HCT116 (cell line): ENCODE measurements at regions of chr1 and their contacts with region 1.

Region 1: GRCh38 chr1:9110669-9111356 is 18.1 kb downstream of the GPR157 start:
- DNase-seq: peak; percentile 62
- ATAC-seq: peak; percentile 94
- H3K4me3 ChIP-seq: no peak overlapping the region
- H3K27ac ChIP-seq: no peak overlapping the region
- H3K4me1 ChIP-seq: peaks cover 0 to 3% of the 10 kb centered on the region in 2 experiments; a peak in 2 of 4 replicates
- H3K27me3 ChIP-seq: no peaks in the 10 kb centered on the region
- CTCF ChIP-seq: peak; percentile 94 to 96 (median 95)
- POLR2A ChIP-seq: no peak
- RAD21 ChIP-seq: peak; percentile 98

Region 2: GRCh38 chr1:9038881-9039760 is 71.7 kb before region 1 on chr1:
- CTCF ChIA-PET with region 1: no interaction called
- POLR2A ChIA-PET with region 1: no interaction called
- RAD21 ChIA-PET with region 1: no interaction called
- intact Hi-C with region 1: no loop called
- DNase-seq: no peak
- ATAC-seq: no peak
- H3K4me3 ChIP-seq: no peak overlapping the region
- H3K27ac ChIP-seq: no peak overlapping the region
- H3K4me1 ChIP-seq: no peaks in the 10 kb centered on the region
- H3K27me3 ChIP-seq: no peaks in the 10 kb centered on the region
- CTCF ChIP-seq: no peak
- POLR2A ChIP-seq: no peak
- RAD21 ChIP-seq: no peak

Region 3: GRCh38 chr1:9069326-9070100 is 41.3 kb before region 1 on chr1 and contains the start of gene SLC2A5:
- CTCF ChIA-PET with region 1: no interaction called
- POLR2A ChIA-PET with region 1: no interaction called
- RAD21 ChIA-PET with region 1: no interaction called
- intact Hi-C with region 1: no loop called
- DNase-seq: no peak
- ATAC-seq: no peak
- H3K4me3 ChIP-seq: no peak within 1 kb of the TSS
- H3K27ac ChIP-seq: no peak within 1 kb of the TSS
- H3K4me1 ChIP-seq: no peaks in the 10 kb centered on the region
- H3K27me3 ChIP-seq: no peaks in the 10 kb centered on the region
- CTCF ChIP-seq: no peak
- POLR2A ChIP-seq: no peak
- RAD21 ChIP-seq: no peak
- total RNA-seq, gene SLC2A5: not detected

Region 4: GRCh38 chr1:9121496-9122409 is 10.9 kb after region 1 on chr1:
- CTCF ChIA-PET with region 1: interaction called, 11 read pairs
- POLR2A ChIA-PET with region 1: no interaction called
- RAD21 ChIA-PET with region 1: no interaction called
- intact Hi-C with region 1: no loop called
- DNase-seq: no peak
- ATAC-seq: no peak
- H3K4me3 ChIP-seq: no peak overlapping the region
- H3K27ac ChIP-seq: no peak overlapping the region
- H3K4me1 ChIP-seq: peaks cover 0 to 7% of the 10 kb centered on the region in 2 experiments; a peak in 2 of 4 replicates
- H3K27me3 ChIP-seq: no peaks in the 10 kb centered on the region
- CTCF ChIP-seq: no peak
- POLR2A ChIP-seq: no peak
- RAD21 ChIP-seq: no peak

Region 5: GRCh38 chr1:9196129-9197040 is 85.6 kb after region 1 on chr1:
- CTCF ChIA-PET with region 1: interaction called, 54 read pairs
- POLR2A ChIA-PET with region 1: interaction called, 6 read pairs
- RAD21 ChIA-PET with region 1: interaction called, 10 to 11 read pairs
- intact Hi-C with region 1: loop called (anchors 1 kb)
- DNase-seq: no peak
- ATAC-seq: peak; percentile 83
- H3K4me3 ChIP-seq: no peak overlapping the region
- H3K27ac ChIP-seq: no peak overlapping the region
- H3K4me1 ChIP-seq: peaks cover 2 to 18% of the 10 kb centered on the region in 2 experiments; a peak in 2 of 4 replicates
- H3K27me3 ChIP-seq: peaks cover 19% of the 10 kb centered on the region; the same call in 1 of the 2 replicates
- CTCF ChIP-seq: peak; percentile 78 to 95 (median 84)
- POLR2A ChIP-seq: no peak
- RAD21 ChIP-seq: peak; percentile 98

Region 6: GRCh38 chr1:9249534-9250410 is 139.0 kb after region 1 on chr1:
- CTCF ChIA-PET with region 1: interaction called, 6 read pairs
- POLR2A ChIA-PET with region 1: no interaction called
- RAD21 ChIA-PET with region 1: no interaction called
- intact Hi-C with region 1: loop called (anchors 2 kb)
- DNase-seq: no peak
- ATAC-seq: peak; percentile 92
- H3K4me3 ChIP-seq: no peak overlapping the region
- H3K27ac ChIP-seq: no peak overlapping the region
- H3K4me1 ChIP-seq: no peaks in the 10 kb centered on the region
- H3K27me3 ChIP-seq: no peaks in the 10 kb centered on the region
- CTCF ChIP-seq: peak in 2 of 3 experiments; percentile 59 to 77; a peak in 4 of 6 replicates
- POLR2A ChIP-seq: no peak
- RAD21 ChIP-seq: peak; percentile 58